ENCODE measurements at regions of chr2 and their contacts with region 1.

Region 1: GRCh38 chr2:191302459-191303139 is 57.4 kb downstream of the MYO1B start:
- DNase-seq: no peak
- CTCF ChIP-seq: peak; percentile 26

Region 2: DNA sequence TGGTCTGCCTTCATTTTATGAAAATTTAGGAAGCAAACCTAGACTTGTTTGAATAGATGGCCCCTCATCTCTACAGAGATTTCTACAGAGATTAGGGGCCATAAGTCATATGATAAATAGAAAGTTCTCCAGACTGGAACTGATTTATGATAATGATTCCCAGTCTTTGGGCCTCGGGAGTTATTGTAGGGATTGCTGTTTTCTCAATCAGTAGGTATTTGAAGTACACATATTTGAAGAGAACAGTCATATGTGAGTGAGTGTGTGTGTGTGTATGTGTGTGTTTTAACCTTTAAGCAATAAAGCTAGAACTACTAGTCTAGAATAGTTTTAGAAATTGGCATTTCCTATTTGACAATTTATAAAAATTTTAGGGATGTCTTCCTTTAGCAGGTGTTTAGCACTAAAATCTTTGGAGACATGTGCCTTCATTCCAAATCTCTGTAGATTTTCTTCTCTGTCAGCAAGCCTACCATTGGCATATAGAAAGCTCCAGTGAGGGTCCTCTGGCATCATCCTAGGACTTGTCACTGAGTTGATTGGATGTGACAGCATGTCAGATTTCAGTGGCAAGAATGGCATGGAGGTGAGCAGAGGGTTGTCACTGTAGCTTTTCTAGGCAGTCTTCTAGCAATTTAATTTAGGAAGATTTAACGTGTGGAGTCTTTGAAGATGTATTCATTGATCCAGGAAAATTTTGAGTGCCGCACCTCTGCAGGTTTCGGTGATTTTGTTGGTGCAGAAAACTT is 13.8 kb after region 1 on chr2:
- CTCF ChIA-PET with region 1: interaction called, 23 read pairs
- POLR2A ChIA-PET with region 1: no interaction called
- DNase-seq: no peak
- CTCF ChIP-seq: no peak

Region 3: DNA sequence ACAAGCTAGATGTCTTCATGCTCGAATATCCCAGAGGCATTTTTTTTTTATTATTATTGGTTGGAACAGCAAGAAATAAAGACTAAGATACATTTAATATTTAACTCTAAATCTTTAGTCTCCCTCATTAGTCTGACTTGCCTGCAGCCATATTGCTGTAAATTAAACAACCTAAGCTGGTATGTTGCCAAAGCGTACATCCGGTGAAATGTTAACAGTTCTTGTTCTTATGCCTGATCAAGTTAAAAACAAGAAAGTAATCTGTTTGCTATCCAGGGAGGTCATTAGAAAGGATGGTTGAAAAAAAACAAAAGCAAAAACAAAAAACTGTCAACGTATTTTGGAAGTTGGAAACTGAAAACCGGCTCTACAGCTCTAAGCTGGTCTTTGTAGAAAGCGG is 249.5 kb after region 1 on chr2:
- CTCF ChIA-PET with region 1: no interaction called
- POLR2A ChIA-PET with region 1: no interaction called
- DNase-seq: no peak
- CTCF ChIP-seq: no peak